ENCODE measurements at regions of chr1 and their contacts with region 1.

Region 1: GRCh38 chr1:98824736-98825135 is 163.2 kb downstream of the SNX7 start:
- DNase-seq: no peak
- ATAC-seq: no peak
- H3K4me3 Mint-ChIP-seq: no peak overlapping the region
- H3K27ac Mint-ChIP-seq: no peak overlapping the region
- H3K4me1 Mint-ChIP-seq: no peaks in the 10 kb centered on the region
- H3K27me3 Mint-ChIP-seq: no peaks in the 10 kb centered on the region

Region 2: DNA sequence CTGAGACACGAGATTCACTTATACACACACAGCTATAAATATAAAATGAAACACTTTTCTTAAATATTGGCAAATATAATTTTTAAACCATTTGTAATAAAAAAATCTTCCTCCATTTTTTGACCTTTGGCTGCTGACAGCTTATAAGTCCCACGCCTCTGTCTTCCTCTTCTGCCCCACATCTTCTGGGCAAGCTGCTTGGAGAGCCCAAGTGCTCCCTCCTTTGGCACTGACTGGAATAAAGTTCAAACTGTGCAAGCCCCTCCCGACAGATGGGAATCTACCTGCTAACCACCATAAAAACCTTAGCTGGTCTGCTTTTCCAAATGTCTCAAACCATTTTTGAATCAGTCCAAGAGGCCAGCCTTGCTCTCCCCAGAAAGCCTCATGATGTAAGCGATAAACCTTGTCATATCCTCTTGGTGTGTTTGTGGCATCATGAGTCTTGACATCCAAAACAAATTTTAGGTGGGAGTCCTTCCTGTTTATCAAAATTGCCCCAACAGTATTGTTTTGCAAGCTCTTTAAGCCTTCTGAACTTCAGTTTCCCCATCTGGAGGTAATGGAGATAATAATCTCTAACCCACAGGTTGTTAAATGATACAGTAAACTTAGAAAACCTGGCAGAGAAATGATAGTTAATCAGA is 63.4 kb before region 1 on chr1:
- CTCF ChIA-PET with region 1: no interaction called
- POLR2A ChIA-PET with region 1: no interaction called
- intact Hi-C with region 1: loop called in 1 of 2 experiments (anchors 10 kb)
- DNase-seq: peak; percentile 5
- ATAC-seq: no peak
- H3K4me3 Mint-ChIP-seq: no peak overlapping the region
- H3K27ac Mint-ChIP-seq: no peak overlapping the region
- H3K4me1 Mint-ChIP-seq: peaks cover 8% of the 10 kb centered on the region
- H3K27me3 Mint-ChIP-seq: no peaks in the 10 kb centered on the region

Measured in activated CD4-positive, alpha-beta T cell treated with anti-CD3 and anti-CD28 coated beads for 36 hours (primary cell).